ENCODE measurements at regions of chr11 and their contacts with region 1.

Region 1: GRCh38 chr11:131064373-131064991 is 148.2 kb upstream of the SNX19 start:
- DNase-seq: peak; percentile 44 to 68 (median 55)
- H3K4me3 ChIP-seq: no peak overlapping the region
- H3K27ac ChIP-seq: no peak overlapping the region
- H3K4me1 ChIP-seq: no peaks in the 10 kb centered on the region
- H3K27me3 ChIP-seq: peaks cover 0 to 12% (median 5%) of the 10 kb centered on the region in 5 experiments

Region 2: DNA sequence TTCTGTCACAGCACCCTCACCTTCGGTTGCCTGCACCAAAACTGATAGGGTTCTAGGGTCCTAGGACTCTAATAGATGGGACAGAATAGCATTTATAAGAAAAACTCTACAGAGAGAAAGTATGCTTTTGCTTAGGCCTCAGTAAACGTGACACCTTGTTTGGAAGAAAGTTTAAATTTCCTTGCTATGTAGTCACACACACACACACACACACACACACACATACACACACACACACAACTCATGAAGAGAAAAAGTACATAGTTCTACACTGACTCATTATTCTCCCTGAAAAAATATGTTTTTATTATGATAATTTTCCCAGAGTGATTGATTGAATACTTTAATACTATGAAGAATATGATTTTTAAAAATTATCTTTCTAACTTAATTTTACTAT is 72.6 kb after region 1 on chr11:
- CTCF ChIA-PET with region 1: no interaction called
- POLR2A ChIA-PET with region 1: no interaction called
- DNase-seq: no peak
- H3K4me3 ChIP-seq: no peak overlapping the region
- H3K27ac ChIP-seq: no peak overlapping the region
- H3K4me1 ChIP-seq: no peaks in the 10 kb centered on the region
- H3K27me3 ChIP-seq: no peaks in the 10 kb centered on the region

Region 3: DNA sequence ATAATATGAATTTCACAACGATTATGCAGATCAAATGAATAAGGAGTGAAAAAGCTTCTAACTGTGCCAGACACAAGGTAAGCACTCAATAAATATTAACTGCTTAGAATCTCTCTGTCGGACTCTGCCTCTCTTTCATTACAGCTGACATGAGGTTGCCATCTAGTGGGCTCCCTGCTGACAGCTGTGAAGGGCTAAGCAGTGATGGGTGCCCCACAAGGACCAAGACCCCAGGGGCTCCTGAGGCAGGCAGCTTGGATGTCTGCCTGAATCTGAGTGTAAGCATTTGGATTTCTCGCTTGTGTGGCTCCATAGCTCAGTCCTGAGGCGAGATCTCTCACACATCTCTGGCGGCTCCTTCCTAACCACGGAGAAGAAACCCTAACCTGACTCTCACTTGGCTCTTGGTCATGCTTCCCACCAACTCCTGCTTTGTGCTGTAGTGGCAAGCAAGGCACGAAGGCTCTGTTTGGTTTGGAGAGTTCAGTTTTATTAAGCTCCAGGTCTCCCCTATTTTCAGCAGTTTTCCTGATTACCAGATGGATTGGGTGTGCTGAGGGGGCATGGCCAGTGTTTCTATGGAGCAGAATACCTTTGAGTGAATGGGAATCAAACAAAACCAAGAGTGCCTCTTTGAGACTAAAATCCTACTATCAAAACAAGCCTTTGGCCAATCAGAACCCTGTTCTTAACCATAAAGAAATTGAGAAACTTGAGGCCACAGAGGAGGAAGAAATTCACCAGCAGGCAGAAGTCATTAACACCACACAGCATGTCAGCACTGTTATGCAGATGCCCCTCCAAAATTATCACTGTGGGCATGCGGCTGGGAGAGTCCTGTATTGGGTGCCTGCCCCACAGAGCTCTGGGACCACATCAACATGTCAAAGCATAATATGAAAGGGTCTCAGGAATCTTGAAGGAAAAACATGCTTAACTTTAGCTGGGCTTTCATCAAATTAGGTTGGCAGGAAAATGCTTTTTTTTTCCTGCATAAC is 153.1 kb after region 1 on chr11:
- CTCF ChIA-PET with region 1: interaction called, 58 read pairs
- POLR2A ChIA-PET with region 1: no interaction called
- DNase-seq: peak; percentile 7 to 40 (median 19)
- H3K4me3 ChIP-seq: no peak overlapping the region
- H3K27ac ChIP-seq: no peak overlapping the region
- H3K4me1 ChIP-seq: no peaks in the 10 kb centered on the region
- H3K27me3 ChIP-seq: peaks cover 0 to 15% (median 2%) of the 10 kb centered on the region in 5 experiments

Region 4: DNA sequence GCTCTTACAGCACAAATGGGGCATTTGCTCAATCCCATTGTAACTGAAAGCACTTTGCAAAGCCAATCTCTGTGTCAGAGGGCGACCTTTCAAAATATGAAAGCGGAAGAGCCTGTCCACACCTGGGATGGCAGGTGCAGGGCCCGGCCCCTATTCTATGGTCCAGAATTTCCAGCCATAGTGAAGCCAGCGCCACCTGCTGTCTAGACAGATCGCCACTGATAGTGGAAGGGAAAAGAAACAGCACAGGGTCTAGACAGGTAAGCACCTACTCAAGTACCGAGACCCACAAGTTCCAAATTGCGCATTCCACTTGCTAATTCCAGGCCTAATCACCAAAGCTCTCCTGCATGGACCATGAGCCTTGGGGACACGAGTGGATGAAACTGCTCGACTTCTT is 447.3 kb after region 1 on chr11:
- CTCF ChIA-PET with region 1: interaction called, 11 read pairs
- POLR2A ChIA-PET with region 1: no interaction called
- DNase-seq: peak; percentile 6 to 31 (median 15)
- H3K4me3 ChIP-seq: no peak overlapping the region
- H3K27ac ChIP-seq: no peak overlapping the region
- H3K4me1 ChIP-seq: no peaks in the 10 kb centered on the region
- H3K27me3 ChIP-seq: peaks cover 0 to 3% (median 0%) of the 10 kb centered on the region in 5 experiments

Measured in common myeloid progenitor, CD34-positive (primary cell).